ENCODE measurements at regions of chr11 and their contacts with region 1.

Region 1: GRCh38 chr11:57567515-57568329 is at the start of gene UBE2L6:
- DNase-seq: peak; percentile 34
- H3K4me3 Mint-ChIP-seq: peak within 1 kb of the TSS; percentile 94
- H3K27ac Mint-ChIP-seq: peak within 1 kb of the TSS; percentile 63
- H3K4me1 Mint-ChIP-seq: peaks cover 34% of the 10 kb centered on the region
- H3K27me3 Mint-ChIP-seq: no peaks in the 10 kb centered on the region
- CTCF ChIP-seq: no peak
- total RNA-seq, gene UBE2L6: 17.0 and 17.3 TPM in 2 replicates

Region 2: GRCh38 chr11:57345555-57346211 is 222.0 kb before region 1 on chr11:
- CTCF ChIA-PET with region 1: interaction called, 6 read pairs
- POLR2A ChIA-PET with region 1: interaction called, 3 read pairs
- intact Hi-C with region 1: loop called (anchors 5 kb)
- DNase-seq: peak; percentile 85
- H3K4me3 Mint-ChIP-seq: no peak overlapping the region
- H3K27ac Mint-ChIP-seq: no peak overlapping the region
- H3K4me1 Mint-ChIP-seq: no peaks in the 10 kb centered on the region
- H3K27me3 Mint-ChIP-seq: no peaks in the 10 kb centered on the region
- CTCF ChIP-seq: peak; percentile 90

Region 3: DNA sequence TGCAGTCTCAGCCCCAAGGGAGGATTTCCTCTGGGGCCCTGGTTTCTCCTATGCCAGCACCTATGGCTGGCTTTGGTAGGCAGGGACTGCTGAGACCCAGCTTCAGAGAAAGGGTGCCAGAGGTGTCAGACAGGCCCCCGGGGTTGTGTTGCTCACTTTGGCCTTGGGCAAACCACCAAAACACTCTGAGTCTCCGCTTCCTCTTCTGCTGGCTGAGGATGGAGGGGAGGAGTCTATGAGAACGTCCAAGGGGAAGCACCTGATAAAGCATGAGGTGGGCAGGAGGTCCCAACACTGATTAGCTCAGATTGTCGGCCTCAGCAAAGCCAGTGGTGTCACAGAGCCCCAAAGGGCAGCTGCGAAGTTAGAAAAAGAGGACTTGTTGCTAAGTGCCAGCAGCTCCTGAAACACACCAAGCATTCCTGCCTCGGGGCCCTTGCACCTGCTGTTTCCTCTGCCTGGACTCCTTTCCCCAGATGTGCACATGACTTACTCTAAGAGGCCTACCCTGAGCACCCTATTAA is 19.8 kb before region 1 on chr11:
- CTCF ChIA-PET with region 1: interaction called, 10 read pairs
- POLR2A ChIA-PET with region 1: interaction called, 3 read pairs
- intact Hi-C with region 1: no loop called
- DNase-seq: no peak
- H3K4me3 Mint-ChIP-seq: no peak overlapping the region
- H3K27ac Mint-ChIP-seq: no peak overlapping the region
- H3K4me1 Mint-ChIP-seq: peaks cover 7% of the 10 kb centered on the region
- H3K27me3 Mint-ChIP-seq: peaks cover 11% of the 10 kb centered on the region
- CTCF ChIP-seq: no peak

Region 4: GRCh38 chr11:57614234-57614772 is 46.6 kb after region 1 on chr11:
- CTCF ChIA-PET with region 1: interaction called, 11 read pairs
- POLR2A ChIA-PET with region 1: no interaction called
- intact Hi-C with region 1: no loop called
- DNase-seq: no peak
- H3K4me3 Mint-ChIP-seq: no peak overlapping the region
- H3K27ac Mint-ChIP-seq: no peak overlapping the region
- H3K4me1 Mint-ChIP-seq: no peaks in the 10 kb centered on the region
- H3K27me3 Mint-ChIP-seq: peaks cover 36% of the 10 kb centered on the region
- CTCF ChIP-seq: no peak

Region 5: GRCh38 chr11:57644748-57645688 is 77.3 kb after region 1 on chr11:
- CTCF ChIA-PET with region 1: interaction called, 315 read pairs
- POLR2A ChIA-PET with region 1: interaction called, 31 read pairs
- intact Hi-C with region 1: loop called (anchors 1 kb)
- DNase-seq: peak; percentile 83
- H3K4me3 Mint-ChIP-seq: no peak overlapping the region
- H3K27ac Mint-ChIP-seq: no peak overlapping the region
- H3K4me1 Mint-ChIP-seq: peaks cover 28% of the 10 kb centered on the region
- H3K27me3 Mint-ChIP-seq: peaks cover 35% of the 10 kb centered on the region
- CTCF ChIP-seq: peak; percentile 59

Region 6: DNA sequence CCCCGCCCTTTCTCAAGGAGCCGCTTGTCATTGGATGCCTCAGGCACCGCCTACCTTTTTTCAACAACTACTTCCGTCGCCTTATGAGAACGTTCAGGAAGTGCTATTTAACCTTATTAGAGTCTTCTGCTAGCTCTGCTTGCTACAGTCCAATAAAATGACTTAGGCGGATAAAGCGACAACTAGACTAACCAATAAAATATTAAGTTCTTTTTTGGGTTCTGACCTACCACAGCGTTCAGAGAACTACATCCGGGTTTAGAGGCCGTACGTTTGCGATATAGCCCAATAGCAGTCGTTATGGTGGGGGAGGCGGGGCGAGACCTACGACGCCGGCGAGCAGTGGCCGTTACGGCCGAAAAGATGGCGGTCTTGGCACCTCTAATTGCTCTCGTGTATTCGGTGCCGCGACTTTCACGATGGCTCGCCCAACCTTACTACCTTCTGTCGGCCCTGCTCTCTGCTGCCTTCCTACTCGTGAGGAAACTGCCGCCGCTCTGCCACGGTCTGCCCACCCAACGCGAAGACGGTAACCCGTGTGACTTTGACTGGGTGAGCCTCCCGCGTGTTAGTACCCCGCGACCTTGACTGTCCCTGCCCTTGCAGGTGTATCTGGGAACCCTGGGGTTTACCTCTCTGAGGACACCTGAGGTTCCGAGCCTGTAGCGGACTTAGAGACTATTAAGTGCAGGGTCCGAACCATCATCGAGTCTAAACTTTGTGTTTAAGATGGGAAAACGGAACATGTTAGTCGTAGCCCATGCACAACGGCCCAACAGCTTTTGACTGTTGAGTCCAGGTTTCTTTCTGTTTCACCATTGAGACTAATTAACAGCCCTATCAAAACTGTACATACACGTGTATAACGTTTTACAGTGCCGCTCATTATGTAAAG is 144.8 kb after region 1 on chr11 and contains the start of gene TMX2:
- CTCF ChIA-PET with region 1: interaction called, 3 read pairs
- POLR2A ChIA-PET with region 1: interaction called, 5 read pairs
- intact Hi-C with region 1: loop called (anchors 5 kb)
- DNase-seq: peak; percentile 99
- H3K4me3 Mint-ChIP-seq: peak within 1 kb of the TSS; percentile 90
- H3K27ac Mint-ChIP-seq: peak within 1 kb of the TSS; percentile 81
- H3K4me1 Mint-ChIP-seq: peaks cover 22% of the 10 kb centered on the region
- H3K27me3 Mint-ChIP-seq: no peaks in the 10 kb centered on the region
- CTCF ChIP-seq: no peak
- total RNA-seq, gene TMX2: 145 and 161 TPM in 2 replicates

Region 7: GRCh38 chr11:57983191-57983590 is 415.5 kb after region 1 on chr11:
- CTCF ChIA-PET with region 1: no interaction called
- POLR2A ChIA-PET with region 1: no interaction called
- intact Hi-C with region 1: no loop called
- DNase-seq: no peak
- H3K4me3 Mint-ChIP-seq: no peak overlapping the region
- H3K27ac Mint-ChIP-seq: no peak overlapping the region
- H3K4me1 Mint-ChIP-seq: peaks cover 14% of the 10 kb centered on the region
- H3K27me3 Mint-ChIP-seq: no peaks in the 10 kb centered on the region
- CTCF ChIP-seq: no peak

Measured in MCF 10A (cell line).